ENCODE measurements at regions of chr3 and their contacts with region 1.

Region 1: DNA sequence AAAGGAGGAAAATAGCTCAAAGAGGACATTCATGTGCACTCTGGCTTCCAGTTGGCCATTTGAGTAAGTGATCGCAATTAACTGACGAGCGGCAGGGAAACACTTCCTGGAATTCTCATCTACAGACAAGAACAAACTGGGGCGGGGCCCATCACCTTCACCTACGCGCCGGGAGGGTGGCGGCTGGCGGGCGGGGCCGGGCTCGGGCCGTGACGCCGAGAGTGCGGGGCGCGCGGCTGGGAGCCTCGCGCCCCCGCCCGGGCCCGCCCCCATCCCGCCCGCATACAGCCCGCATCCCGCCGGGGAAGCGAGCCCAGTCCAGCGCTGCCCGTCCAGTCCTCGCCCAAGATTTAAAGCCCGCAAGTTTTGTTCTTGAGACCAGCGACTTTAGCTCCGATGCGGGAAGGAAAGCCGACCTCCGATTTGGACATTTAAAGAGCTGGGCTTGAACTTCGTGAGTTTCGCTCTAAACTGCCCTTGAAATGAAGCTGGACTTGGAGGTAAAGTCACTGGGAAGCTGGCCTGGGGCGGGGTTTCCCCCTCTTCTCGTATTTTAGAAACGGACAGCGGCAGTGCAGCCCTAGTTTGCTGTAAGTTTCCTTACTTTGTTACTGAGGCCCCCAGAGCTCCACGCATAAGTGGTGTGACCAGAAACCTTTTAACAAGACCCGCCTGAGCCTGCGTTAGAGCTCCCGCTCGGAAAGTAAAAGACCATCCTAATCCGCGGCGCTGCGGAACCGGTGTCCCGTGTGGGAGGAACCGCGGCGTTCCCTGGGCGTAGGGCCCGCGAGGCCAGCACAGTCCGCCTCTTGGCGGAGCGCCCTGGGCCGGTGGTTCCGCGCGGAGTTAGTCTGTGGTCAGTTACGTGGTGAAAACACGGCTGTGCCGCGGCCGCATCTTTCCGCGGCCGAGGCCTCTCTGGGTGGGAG is at the start of gene B3GNT5:
- DNase-seq: peak; percentile 67
- H3K4me3 Mint-ChIP-seq: peak within 1 kb of the TSS; percentile 76
- H3K27ac Mint-ChIP-seq: peak within 1 kb of the TSS; percentile 75
- H3K4me1 Mint-ChIP-seq: peaks cover 29% of the 10 kb centered on the region
- H3K27me3 Mint-ChIP-seq: peaks cover 2% of the 10 kb centered on the region
- total RNA-seq, gene B3GNT5: 15.0 to 18.8 TPM

Region 2: DNA sequence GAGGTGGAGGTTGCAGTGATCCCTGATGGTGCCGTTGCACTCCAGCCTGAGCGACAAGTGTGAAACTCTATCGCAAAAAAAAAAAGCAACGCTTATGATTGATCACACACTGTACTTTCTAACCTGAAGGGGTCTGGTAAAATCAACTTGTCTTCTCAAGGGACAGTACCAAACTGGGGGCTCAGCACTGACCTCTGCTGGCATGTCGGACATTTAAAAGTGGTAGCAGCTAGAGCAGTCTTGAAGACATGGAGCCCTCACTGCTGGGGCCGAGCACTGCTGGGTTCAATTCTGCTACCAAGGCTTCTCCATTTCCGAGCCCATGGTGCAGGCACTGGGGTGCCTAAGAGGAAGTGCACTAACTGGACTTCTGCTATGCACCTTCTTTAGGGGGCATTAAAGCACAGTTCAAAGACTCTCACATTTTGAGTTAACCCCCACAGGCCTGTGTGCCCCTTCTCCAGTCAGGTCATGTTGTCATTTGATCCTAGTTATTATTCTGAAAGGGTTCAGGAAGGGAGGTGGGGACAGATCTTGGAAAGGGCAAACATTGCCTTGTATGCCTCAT is 64.3 kb before region 1 on chr3:
- CTCF ChIA-PET with region 1: interaction called, 16 read pairs
- intact Hi-C with region 1: loop called (anchors 1 kb)
- DNase-seq: peak; percentile 47
- H3K4me3 Mint-ChIP-seq: no peak overlapping the region
- H3K27ac Mint-ChIP-seq: no peak overlapping the region
- H3K4me1 Mint-ChIP-seq: peaks cover 27% of the 10 kb centered on the region
- H3K27me3 Mint-ChIP-seq: no peaks in the 10 kb centered on the region

Region 3: DNA sequence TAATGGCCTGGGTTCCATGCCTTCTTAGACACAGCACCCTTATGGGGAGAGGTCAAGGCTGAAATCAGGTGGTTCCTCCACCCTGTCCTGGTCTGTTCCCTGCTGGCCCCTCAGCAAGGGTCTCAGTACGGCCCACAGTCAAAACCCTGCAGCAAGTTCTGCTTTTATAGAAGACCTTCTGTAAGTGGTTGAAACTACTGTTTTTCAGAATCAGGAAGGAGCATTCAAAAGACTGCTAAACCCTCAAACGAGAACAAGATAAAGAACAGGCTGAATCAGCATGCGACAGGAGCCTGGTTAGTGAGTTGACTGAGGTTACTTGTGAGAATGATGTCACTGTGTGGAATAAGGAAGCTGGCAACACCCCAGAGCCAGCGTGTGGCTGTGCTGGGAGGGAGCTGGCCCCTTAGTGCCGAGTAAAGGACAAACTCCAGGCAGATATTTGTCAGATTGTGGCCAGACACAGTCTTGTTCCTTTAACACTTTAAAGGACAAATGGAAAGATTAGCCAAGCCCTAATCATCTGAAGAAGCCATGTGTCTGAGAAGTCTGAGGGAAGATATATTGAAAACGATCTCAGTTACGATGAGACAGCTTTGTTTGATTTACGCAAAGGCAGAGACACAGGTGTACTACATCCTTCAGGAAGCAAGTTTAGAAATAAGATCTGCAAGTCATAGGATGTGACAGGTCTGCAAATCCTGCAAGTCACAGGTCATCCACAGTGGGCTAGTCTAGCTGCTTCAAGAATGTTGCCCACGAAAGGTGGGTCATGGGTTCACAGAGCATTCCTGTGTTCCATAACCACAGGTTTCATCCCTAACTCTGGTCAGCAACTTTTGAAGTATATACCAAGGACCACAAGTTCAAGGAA is 53.8 kb after region 1 on chr3:
- CTCF ChIA-PET with region 1: no interaction called
- intact Hi-C with region 1: loop called (anchors 1 kb)
- DNase-seq: peak; percentile 71
- H3K4me3 Mint-ChIP-seq: peak overlapping the region; percentile 19
- H3K27ac Mint-ChIP-seq: peak overlapping the region; percentile 48
- H3K4me1 Mint-ChIP-seq: peaks cover 20% of the 10 kb centered on the region
- H3K27me3 Mint-ChIP-seq: no peaks in the 10 kb centered on the region

Region 4: GRCh38 chr3:183339461-183340079 is 86.3 kb after region 1 on chr3:
- CTCF ChIA-PET with region 1: no interaction called
- intact Hi-C with region 1: no loop called
- DNase-seq: no peak
- H3K4me3 Mint-ChIP-seq: no peak overlapping the region
- H3K27ac Mint-ChIP-seq: no peak overlapping the region
- H3K4me1 Mint-ChIP-seq: peaks cover 7% of the 10 kb centered on the region
- H3K27me3 Mint-ChIP-seq: peaks cover 2% of the 10 kb centered on the region

Region 5: GRCh38 chr3:183377307-183377959 is 124.2 kb after region 1 on chr3:
- CTCF ChIA-PET with region 1: interaction called, 18 read pairs
- intact Hi-C with region 1: loop called (anchors 1 kb)
- DNase-seq: no peak
- H3K4me3 Mint-ChIP-seq: no peak overlapping the region
- H3K27ac Mint-ChIP-seq: no peak overlapping the region
- H3K4me1 Mint-ChIP-seq: peaks cover 21% of the 10 kb centered on the region
- H3K27me3 Mint-ChIP-seq: no peaks in the 10 kb centered on the region

Measured in activated naive CD4-positive, alpha-beta T cell treated with anti-CD3 and anti-CD28 coated beads for 36 hours (primary cell).